IMR-90 (cell line): ENCODE measurements at regions of chrX and their contacts with region 1.

Region 1: GRCh38 chrX:43557792-43558191 is 98.3 kb upstream of the MAOA start:
- DNase-seq: peak; percentile 49
- ATAC-seq: peak; percentile 59; the same call in 1 of the 2 replicates
- H3K4me3 ChIP-seq: no peak overlapping the region
- H3K27ac ChIP-seq: no peak overlapping the region
- H3K4me1 ChIP-seq: no peaks in the 10 kb centered on the region
- H3K27me3 ChIP-seq: no peaks in the 10 kb centered on the region; the same call in 1 of the 2 replicates
- CTCF ChIP-seq: peak; percentile 61
- POLR2A ChIP-seq: no peak
- RAD21 ChIP-seq: peak; percentile 56

Region 2: DNA sequence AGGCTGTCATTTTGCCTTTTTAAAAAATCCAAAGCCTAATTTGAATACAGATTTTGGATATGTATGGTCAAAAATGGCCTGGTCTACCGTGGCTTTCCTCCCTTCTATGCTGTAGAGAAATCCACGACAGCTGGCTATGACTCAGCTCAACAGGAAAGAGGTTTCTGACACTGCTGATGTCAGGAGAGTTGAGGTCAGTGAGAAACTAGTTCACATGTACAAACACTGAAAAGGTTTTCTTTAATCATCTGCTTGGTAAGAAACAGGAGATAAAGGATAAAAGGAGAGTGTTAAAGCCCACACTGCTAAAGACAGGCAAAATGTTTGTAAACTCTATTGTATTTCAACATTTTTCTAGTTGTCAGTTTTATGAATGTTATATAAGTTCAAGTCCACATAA is 1996.7 kb before region 1 on chrX:
- CTCF ChIA-PET with region 1: no interaction called
- POLR2A ChIA-PET with region 1: no interaction called
- dilution Hi-C with region 1: no loop called
- in situ Hi-C with region 1: no loop called
- intact Hi-C with region 1: loop called (anchors 5 kb)
- DNase-seq: peak; percentile 95
- ATAC-seq: peak; percentile 80
- H3K4me3 ChIP-seq: no peak overlapping the region
- H3K27ac ChIP-seq: peak overlapping the region; percentile 69; the same call in 1 of the 2 replicates
- H3K4me1 ChIP-seq: peaks cover 3% of the 10 kb centered on the region
- H3K27me3 ChIP-seq: no peaks in the 10 kb centered on the region; the same call in 1 of the 2 replicates
- CTCF ChIP-seq: no peak
- POLR2A ChIP-seq: no peak
- RAD21 ChIP-seq: no peak

Region 3: GRCh38 chrX:41796577-41796976 is 1761.2 kb before region 1 on chrX:
- CTCF ChIA-PET with region 1: no interaction called
- POLR2A ChIA-PET with region 1: no interaction called
- dilution Hi-C with region 1: no loop called
- in situ Hi-C with region 1: no loop called
- intact Hi-C with region 1: loop called (anchors 5 kb)
- DNase-seq: no peak
- ATAC-seq: no peak
- H3K4me3 ChIP-seq: no peak overlapping the region
- H3K27ac ChIP-seq: no peak overlapping the region
- H3K4me1 ChIP-seq: 0 out of 2 replicates have a peak, but pooled peaks cover 2% of the 10 kb centered on the region
- H3K27me3 ChIP-seq: no peaks in the 10 kb centered on the region
- CTCF ChIP-seq: no peak
- POLR2A ChIP-seq: no peak
- RAD21 ChIP-seq: no peak

Region 4: GRCh38 chrX:43357741-43358140 is 200.1 kb before region 1 on chrX:
- CTCF ChIA-PET with region 1: no interaction called
- POLR2A ChIA-PET with region 1: no interaction called
- dilution Hi-C with region 1: no loop called
- in situ Hi-C with region 1: no loop called
- intact Hi-C with region 1: loop called (anchors 10 kb)
- DNase-seq: no peak
- ATAC-seq: no peak
- H3K4me3 ChIP-seq: no peak overlapping the region
- H3K27ac ChIP-seq: no peak overlapping the region
- H3K4me1 ChIP-seq: no peaks in the 10 kb centered on the region
- H3K27me3 ChIP-seq: peaks cover 2% of the 10 kb centered on the region; the same call in 1 of the 2 replicates
- CTCF ChIP-seq: no peak
- POLR2A ChIP-seq: no peak
- RAD21 ChIP-seq: no peak

Region 5: GRCh38 chrX:43750248-43750676 is 192.5 kb after region 1 on chrX:
- CTCF ChIA-PET with region 1: no interaction called
- POLR2A ChIA-PET with region 1: no interaction called
- dilution Hi-C with region 1: no loop called
- in situ Hi-C with region 1: loop called (anchors 5 kb)
- intact Hi-C with region 1: loop called (anchors 1 kb)
- DNase-seq: peak; percentile 19
- ATAC-seq: peak; percentile 62
- H3K4me3 ChIP-seq: no peak overlapping the region
- H3K27ac ChIP-seq: no peak overlapping the region
- H3K4me1 ChIP-seq: no peaks in the 10 kb centered on the region
- H3K27me3 ChIP-seq: no peaks in the 10 kb centered on the region; the same call in 1 of the 2 replicates
- CTCF ChIP-seq: peak; percentile 49
- POLR2A ChIP-seq: no peak
- RAD21 ChIP-seq: peak; percentile 54